Tibial artery (tissue), 4 donors: ENCODE measurements at regions of chr3 and their contacts with region 1.

Region 1: GRCh38 chr3:115217678-115218451 is 70.8 kb upstream of the ZBTB20 start:
- DNase-seq: no peak
- H3K4me3 ChIP-seq: no peak overlapping the region
- H3K27ac ChIP-seq: no peak overlapping the region
- H3K4me1 ChIP-seq: peaks cover 0 to 10% (median 2%) of the 10 kb centered on the region in 4 donors
- H3K27me3 ChIP-seq: no peaks in the 10 kb centered on the region
- CTCF ChIP-seq: peak; percentile 70 to 78

Region 2: GRCh38 chr3:115692887-115693524 is 475.1 kb after region 1 on chr3:
- intact Hi-C with region 1: loop called (anchors 5 kb)
- DNase-seq: peak; percentile 72 to 81
- H3K4me3 ChIP-seq: no peak overlapping the region
- H3K27ac ChIP-seq: no peak overlapping the region
- H3K4me1 ChIP-seq: peaks cover 0 to 3% (median 0%) of the 10 kb centered on the region in 4 donors
- H3K27me3 ChIP-seq: no peaks in the 10 kb centered on the region
- CTCF ChIP-seq: peak; percentile 74 to 77

Region 3: GRCh38 chr3:115784739-115785536 is 567.1 kb after region 1 on chr3:
- intact Hi-C with region 1: loop called (anchors 5 kb)
- DNase-seq: no peak
- H3K4me3 ChIP-seq: peak overlapping the region; percentile 65 to 80
- H3K27ac ChIP-seq: peak overlapping the region; percentile 82 to 83
- H3K4me1 ChIP-seq: peaks cover 0 to 11% (median 4%) of the 10 kb centered on the region in 4 donors
- H3K27me3 ChIP-seq: no peaks in the 10 kb centered on the region
- CTCF ChIP-seq: no peak